ENCODE measurements at regions of chr11 and their contacts with region 1.

Region 1: GRCh38 chr11:72722050-72722748 is 30.0 kb downstream of the ARAP1 start:
- DNase-seq: peak; percentile 92
- H3K4me3 ChIP-seq: peak overlapping the region; percentile 50 to 65
- H3K27ac ChIP-seq: peak overlapping the region; percentile 65 to 96
- H3K4me1 ChIP-seq: peaks cover 13 to 53% of the 10 kb centered on the region in 2 experiments
- H3K27me3 ChIP-seq: no peaks in the 10 kb centered on the region
- CTCF ChIP-seq: no peak
- EP300 ChIP-seq: no peak
- RAD21 ChIP-seq: no peak

Region 2: DNA sequence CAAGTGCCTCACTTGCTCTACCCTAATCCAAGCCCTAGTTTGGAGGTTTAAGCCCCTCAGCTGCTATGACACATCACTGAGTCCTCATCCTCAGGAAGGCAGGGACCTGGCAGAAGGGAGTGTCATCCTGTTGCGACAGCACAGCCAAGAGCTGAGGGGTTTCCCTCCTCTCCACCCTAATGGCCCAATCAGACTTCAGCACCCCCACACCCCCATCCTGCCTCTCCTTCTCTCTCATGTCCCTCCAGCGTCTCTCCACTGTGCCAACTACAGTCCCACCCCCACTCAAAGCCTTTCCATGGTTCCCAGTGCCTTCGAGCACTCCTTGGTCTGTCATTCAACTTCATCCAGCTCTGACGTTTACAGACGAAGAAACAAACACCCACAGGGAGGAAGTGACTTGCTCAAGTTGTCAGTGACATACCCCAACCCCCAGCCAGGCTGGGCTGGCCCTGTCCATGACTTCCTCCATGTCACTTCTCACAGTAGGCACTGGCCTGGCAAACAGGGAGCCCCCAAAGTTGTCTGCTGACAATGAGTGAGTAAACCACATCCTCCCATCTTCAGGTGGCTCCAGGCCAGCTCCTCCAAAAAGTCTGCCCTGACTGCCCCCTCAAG is 14.4 kb after region 1 on chr11:
- CTCF ChIA-PET with region 1: interaction called, 42 read pairs
- POLR2A ChIA-PET with region 1: no interaction called
- DNase-seq: no peak
- H3K4me3 ChIP-seq: no peak overlapping the region
- H3K27ac ChIP-seq: peak overlapping the region; percentile 53 to 64
- H3K4me1 ChIP-seq: peaks cover 21 to 46% of the 10 kb centered on the region in 2 experiments; a peak in 3 of 4 replicates
- H3K27me3 ChIP-seq: no peaks in the 10 kb centered on the region
- CTCF ChIP-seq: no peak
- EP300 ChIP-seq: no peak
- RAD21 ChIP-seq: no peak

Region 3: GRCh38 chr11:72758690-72759389 is 36.6 kb after region 1 on chr11:
- CTCF ChIA-PET with region 1: interaction called, 10 read pairs
- POLR2A ChIA-PET with region 1: no interaction called
- DNase-seq: peak; percentile 46
- H3K4me3 ChIP-seq: no peak overlapping the region
- H3K27ac ChIP-seq: no peak overlapping the region
- H3K4me1 ChIP-seq: peaks cover 0 to 4% of the 10 kb centered on the region in 2 experiments; a peak in 3 of 4 replicates
- H3K27me3 ChIP-seq: no peaks in the 10 kb centered on the region
- CTCF ChIP-seq: no peak
- EP300 ChIP-seq: no peak
- RAD21 ChIP-seq: no peak

Region 4: GRCh38 chr11:72781313-72782050 is 59.3 kb after region 1 on chr11:
- CTCF ChIA-PET with region 1: interaction called, 34 read pairs
- POLR2A ChIA-PET with region 1: no interaction called
- DNase-seq: peak; percentile 92
- H3K4me3 ChIP-seq: peak overlapping the region; percentile 46 to 54
- H3K27ac ChIP-seq: no peak overlapping the region
- H3K4me1 ChIP-seq: peaks cover 3 to 52% of the 10 kb centered on the region in 2 experiments; a peak in 2 of 4 replicates
- H3K27me3 ChIP-seq: no peaks in the 10 kb centered on the region
- CTCF ChIP-seq: no peak
- EP300 ChIP-seq: no peak
- RAD21 ChIP-seq: no peak

Region 5: DNA sequence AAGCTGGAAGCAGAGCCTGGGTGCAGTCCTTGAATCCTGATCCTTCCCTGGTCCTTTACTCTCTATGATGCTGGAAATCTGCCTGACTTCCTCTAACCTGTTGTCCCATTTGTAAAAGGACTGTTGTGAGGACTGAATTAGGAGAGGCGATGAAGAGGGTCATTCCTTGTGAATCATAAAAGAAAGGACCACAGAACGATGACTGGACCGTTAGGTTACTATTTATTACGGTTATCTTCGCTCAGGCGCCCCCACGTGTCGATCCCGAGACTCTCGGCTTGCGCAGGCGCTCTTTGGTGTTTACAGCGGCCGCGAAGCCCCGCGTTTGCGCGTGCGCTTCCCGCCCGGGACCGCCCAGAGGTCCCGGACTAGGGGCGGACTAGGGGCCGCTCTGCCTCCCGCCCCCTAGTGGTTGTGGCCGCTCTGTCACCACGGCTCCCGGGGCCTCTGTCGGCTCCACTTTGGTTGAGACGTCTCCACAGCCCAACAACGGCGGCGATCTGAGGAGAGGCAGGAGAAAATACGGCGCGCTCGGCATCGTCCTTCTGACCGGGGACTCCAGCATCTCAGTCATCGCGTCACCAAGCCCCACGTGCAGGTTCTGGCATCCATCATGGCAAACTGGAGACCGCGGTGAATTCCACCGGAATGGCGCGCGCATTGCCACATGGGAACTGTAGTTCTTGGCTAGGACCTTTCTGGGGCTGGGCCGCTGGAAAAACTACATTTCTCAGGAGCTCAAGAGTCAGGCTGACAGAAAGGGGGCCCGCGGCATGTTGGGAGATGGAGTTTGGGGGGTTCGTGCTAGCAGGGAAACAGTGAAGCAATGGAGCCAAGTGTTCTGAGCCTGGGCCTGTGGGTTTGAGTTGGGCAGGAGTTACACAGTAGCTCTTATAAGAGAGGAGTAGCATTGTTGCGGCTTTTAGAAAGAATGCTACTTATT is 71.5 kb after region 1 on chr11 and contains the start of gene STARD10:
- CTCF ChIA-PET with region 1: interaction called, 198 read pairs
- POLR2A ChIA-PET with region 1: interaction called, 4 read pairs
- DNase-seq: peak; percentile 99
- H3K4me3 ChIP-seq: peak within 1 kb of the TSS; percentile 75 to 89
- H3K27ac ChIP-seq: peak within 1 kb of the TSS; percentile 66 to 91
- H3K4me1 ChIP-seq: peaks cover 9 to 26% of the 10 kb centered on the region in 2 experiments; a peak in 2 of 4 replicates
- H3K27me3 ChIP-seq: no peaks in the 10 kb centered on the region
- CTCF ChIP-seq: peak; percentile 99
- EP300 ChIP-seq: no peak; a peak in 1 of 4 replicates
- RAD21 ChIP-seq: peak; percentile 78
- polyA plus RNA-seq, gene STARD10: 42.2 and 47.7 TPM in 2 replicates

Region 6: GRCh38 chr11:72821883-72822799 is 99.9 kb after region 1 on chr11:
- CTCF ChIA-PET with region 1: interaction called, 18 read pairs
- POLR2A ChIA-PET with region 1: interaction called, 3 read pairs
- DNase-seq: peak; percentile 98
- H3K4me3 ChIP-seq: peak overlapping the region; percentile 43 to 61
- H3K27ac ChIP-seq: peak overlapping the region in 1 of 2 experiments; percentile 73; a peak in 2 of 4 replicates
- H3K4me1 ChIP-seq: peaks cover 5 to 21% of the 10 kb centered on the region in 2 experiments; a peak in 2 of 4 replicates
- H3K27me3 ChIP-seq: no peaks in the 10 kb centered on the region
- CTCF ChIP-seq: 0 out of 2 replicates have a peak, but pooled peaks have one; percentile 13
- EP300 ChIP-seq: no peak
- RAD21 ChIP-seq: no peak; the same call in 1 of the 2 replicates

Region 7: GRCh38 chr11:73177778-73178577 is 455.8 kb after region 1 on chr11:
- CTCF ChIA-PET with region 1: interaction called, 23 read pairs
- POLR2A ChIA-PET with region 1: no interaction called
- DNase-seq: peak; percentile 86
- H3K4me3 ChIP-seq: no peak overlapping the region; a peak in 1 of 4 replicates
- H3K27ac ChIP-seq: no peak overlapping the region
- H3K4me1 ChIP-seq: peaks cover 5 to 10% of the 10 kb centered on the region in 2 experiments; a peak in 2 of 4 replicates
- H3K27me3 ChIP-seq: no peaks in the 10 kb centered on the region; the same call in 1 of the 2 replicates
- CTCF ChIP-seq: peak; percentile 79
- EP300 ChIP-seq: no peak
- RAD21 ChIP-seq: peak; percentile 98

Measured in SK-N-SH (cell line).